Naive thymus-derived CD4-positive, alpha-beta T cell (primary cell): ENCODE measurements at regions of chr12 and their contacts with region 1.

Region 1: DNA sequence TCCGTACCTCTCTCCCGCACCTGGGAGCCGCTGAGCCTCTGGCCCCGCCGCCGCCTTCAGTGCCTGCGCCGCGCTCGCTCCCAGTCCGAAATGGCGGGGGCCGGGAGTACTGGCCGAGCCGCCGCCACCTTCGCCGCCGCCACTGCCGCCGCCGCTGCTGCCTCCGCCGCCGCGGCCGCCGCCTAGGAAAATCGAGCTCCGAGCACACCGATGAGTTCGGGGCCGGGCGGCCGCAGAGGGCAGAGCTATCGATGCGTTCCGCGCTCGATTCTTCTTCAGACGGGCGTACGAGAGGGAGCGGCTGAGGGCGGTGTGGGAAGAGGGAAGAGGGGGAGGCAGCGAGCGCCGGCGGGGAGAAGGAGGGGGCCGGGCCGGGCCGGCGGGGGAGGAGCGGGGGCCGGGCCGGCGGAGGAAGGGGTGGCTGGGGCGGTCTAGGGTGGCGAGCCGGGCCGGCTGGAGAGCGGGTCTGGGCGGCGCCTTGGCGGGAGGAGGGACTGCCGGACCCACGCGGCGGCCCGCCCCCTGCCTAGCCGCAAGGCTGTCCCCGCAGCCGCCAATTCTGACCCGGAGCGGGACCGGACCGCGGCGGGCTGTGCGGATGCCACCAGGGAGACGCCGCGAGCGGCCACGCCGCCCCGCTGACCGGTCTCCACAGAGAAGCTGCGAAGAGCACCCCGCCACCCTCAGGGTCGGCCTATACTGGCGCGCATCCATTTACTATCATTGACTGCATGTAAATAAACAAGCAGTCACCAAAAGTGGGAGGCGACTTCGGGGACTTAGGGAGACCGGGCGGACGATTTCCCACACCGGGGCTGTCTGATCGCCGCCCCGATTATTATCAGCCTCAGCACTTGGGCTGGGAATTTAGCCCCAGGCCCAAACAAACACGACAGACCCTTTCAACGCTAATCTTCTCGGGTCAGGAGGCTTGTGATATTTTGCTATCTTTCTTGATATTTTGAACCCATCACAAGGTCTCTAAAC is at the start of gene KRAS:
- DNase-seq: peak; percentile 83 to 90 (median 90)
- ATAC-seq: peak; percentile 96
- H3K4me3 ChIP-seq: peak within 1 kb of the TSS; percentile 64
- H3K4me3 Mint-ChIP-seq: peak within 1 kb of the TSS; percentile 84 to 97 (median 94)
- H3K27ac ChIP-seq: peak within 1 kb of the TSS; percentile 91
- H3K27ac Mint-ChIP-seq: peak within 1 kb of the TSS; percentile 84 to 96 (median 94)
- H3K4me1 ChIP-seq: peaks cover 0 to 5% of the 10 kb centered on the region in 2 donors
- H3K4me1 Mint-ChIP-seq: peaks cover 16 to 51% (median 44%) of the 10 kb centered on the region in 7 donors
- H3K27me3 ChIP-seq: no peaks in the 10 kb centered on the region
- H3K27me3 Mint-ChIP-seq: peaks cover 0 to 20% (median 0%) of the 10 kb centered on the region in 5 donors
- total RNA-seq, gene KRAS: 33.1 to 39.9 (median 35.7) TPM

Region 2: GRCh38 chr12:25269701-25270100 is 18.7 kb after region 1 on chr12:
- CTCF ChIA-PET with region 1: no interaction called
- POLR2A ChIA-PET with region 1: interaction called, 4 read pairs
- intact Hi-C with region 1: loop called in 1 of 2 experiments (anchors 2 kb)
- DNase-seq: no peak
- ATAC-seq: peak; percentile 56
- H3K4me3 ChIP-seq: no peak overlapping the region
- H3K4me3 Mint-ChIP-seq: no peak overlapping the region
- H3K27ac ChIP-seq: no peak overlapping the region
- H3K27ac Mint-ChIP-seq: no peak overlapping the region
- H3K4me1 ChIP-seq: no peaks in the 10 kb centered on the region
- H3K4me1 Mint-ChIP-seq: peaks cover 0 to 4% (median 0%) of the 10 kb centered on the region in 7 donors
- H3K27me3 ChIP-seq: no peaks in the 10 kb centered on the region
- H3K27me3 Mint-ChIP-seq: no peaks in the 10 kb centered on the region

Region 3: GRCh38 chr12:25283006-25283405 is 32.0 kb after region 1 on chr12:
- CTCF ChIA-PET with region 1: interaction called, 3 read pairs
- POLR2A ChIA-PET with region 1: interaction called, 13 read pairs
- intact Hi-C with region 1: loop called in 1 of 2 experiments (anchors 2 kb)
- DNase-seq: no peak
- ATAC-seq: no peak
- H3K4me3 ChIP-seq: no peak overlapping the region
- H3K4me3 Mint-ChIP-seq: peak overlapping the region in 7 of 10 donors; percentile 19 to 70 (median 53)
- H3K27ac ChIP-seq: peak overlapping the region; percentile 41
- H3K27ac Mint-ChIP-seq: peak overlapping the region in 7 of 9 donors; percentile 73 to 92 (median 81)
- H3K4me1 ChIP-seq: peaks cover 22 to 48% of the 10 kb centered on the region in 2 donors
- H3K4me1 Mint-ChIP-seq: peaks cover 12 to 66% (median 57%) of the 10 kb centered on the region in 7 donors
- H3K27me3 ChIP-seq: no peaks in the 10 kb centered on the region
- H3K27me3 Mint-ChIP-seq: peaks cover 0 to 3% (median 0%) of the 10 kb centered on the region in 5 donors

Region 4: GRCh38 chr12:25364529-25365339 is 113.7 kb after region 1 on chr12:
- CTCF ChIA-PET with region 1: interaction called, 3 read pairs
- POLR2A ChIA-PET with region 1: interaction called, 8 read pairs
- intact Hi-C with region 1: loop called in 1 of 2 experiments (anchors 1 kb)
- DNase-seq: peak in 2 of 9 donors; percentile 22 to 27
- ATAC-seq: peak; percentile 55
- H3K4me3 ChIP-seq: no peak overlapping the region
- H3K4me3 Mint-ChIP-seq: peak overlapping the region; percentile 0 to 83 (median 64)
- H3K27ac ChIP-seq: no peak overlapping the region
- H3K27ac Mint-ChIP-seq: peak overlapping the region; percentile 5 to 82 (median 61)
- H3K4me1 ChIP-seq: peaks cover 0 to 8% of the 10 kb centered on the region in 2 donors
- H3K4me1 Mint-ChIP-seq: peaks cover 0 to 18% (median 15%) of the 10 kb centered on the region in 7 donors
- H3K27me3 ChIP-seq: no peaks in the 10 kb centered on the region
- H3K27me3 Mint-ChIP-seq: peaks cover 0 to 4% (median 0%) of the 10 kb centered on the region in 5 donors

Region 5: DNA sequence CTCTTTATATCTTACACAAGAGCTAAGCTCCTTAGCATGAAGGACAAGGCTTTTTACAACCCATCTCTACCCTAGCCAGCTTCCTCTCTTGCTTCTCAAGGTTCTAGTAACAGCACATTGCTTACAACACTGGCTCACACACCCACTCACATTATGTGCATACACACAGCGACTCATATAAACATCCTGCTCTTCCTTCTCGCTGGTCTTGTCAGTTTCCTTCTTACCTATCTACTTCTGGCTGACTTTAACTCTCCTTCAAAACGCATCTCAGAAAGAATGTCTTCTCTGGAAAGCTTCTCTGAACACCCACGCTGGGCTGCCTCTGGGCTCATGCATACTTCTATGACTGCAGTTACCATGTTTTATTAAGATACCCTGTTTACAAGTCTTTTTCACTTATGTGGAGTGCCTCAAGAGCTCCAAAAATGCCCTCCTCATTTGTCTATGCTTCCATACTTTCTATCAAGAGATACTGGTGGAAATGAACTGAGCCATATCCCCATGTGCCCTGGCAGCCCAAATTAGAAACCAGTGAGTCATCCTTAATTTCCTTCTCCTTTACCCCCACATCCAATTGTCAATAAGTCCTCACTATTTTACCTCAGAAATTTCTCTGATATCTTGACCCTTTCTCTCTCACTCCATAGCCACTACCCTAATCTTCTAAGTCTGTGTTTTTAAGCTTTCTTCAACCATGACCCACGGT is 126.6 kb after region 1 on chr12:
- CTCF ChIA-PET with region 1: interaction called, 6 read pairs
- POLR2A ChIA-PET with region 1: interaction called, 52 read pairs
- intact Hi-C with region 1: no loop called
- DNase-seq: peak in 8 of 9 donors; percentile 46 to 81 (median 68)
- ATAC-seq: peak; percentile 90
- H3K4me3 ChIP-seq: no peak overlapping the region
- H3K4me3 Mint-ChIP-seq: peak overlapping the region; percentile 26 to 70 (median 60)
- H3K27ac ChIP-seq: peak overlapping the region; percentile 80
- H3K27ac Mint-ChIP-seq: peak overlapping the region; percentile 82 to 97 (median 92)
- H3K4me1 ChIP-seq: peaks cover 9 to 38% of the 10 kb centered on the region in 2 donors
- H3K4me1 Mint-ChIP-seq: peaks cover 27 to 71% (median 68%) of the 10 kb centered on the region in 7 donors
- H3K27me3 ChIP-seq: no peaks in the 10 kb centered on the region
- H3K27me3 Mint-ChIP-seq: no peaks in the 10 kb centered on the region

Region 6: GRCh38 chr12:25482625-25483024 is 231.6 kb after region 1 on chr12:
- CTCF ChIA-PET with region 1: no interaction called
- POLR2A ChIA-PET with region 1: no interaction called
- intact Hi-C with region 1: no loop called
- DNase-seq: no peak
- ATAC-seq: no peak
- H3K4me3 ChIP-seq: no peak overlapping the region
- H3K4me3 Mint-ChIP-seq: no peak overlapping the region
- H3K27ac ChIP-seq: no peak overlapping the region
- H3K27ac Mint-ChIP-seq: no peak overlapping the region
- H3K4me1 ChIP-seq: no peaks in the 10 kb centered on the region
- H3K4me1 Mint-ChIP-seq: no peaks in the 10 kb centered on the region
- H3K27me3 ChIP-seq: no peaks in the 10 kb centered on the region
- H3K27me3 Mint-ChIP-seq: no peaks in the 10 kb centered on the region

Region 7: GRCh38 chr12:25591144-25591543 is 340.1 kb after region 1 on chr12:
- CTCF ChIA-PET with region 1: no interaction called
- POLR2A ChIA-PET with region 1: no interaction called
- intact Hi-C with region 1: loop called in 1 of 2 experiments (anchors 10 kb)
- DNase-seq: no peak
- ATAC-seq: no peak
- H3K4me3 ChIP-seq: no peak overlapping the region
- H3K4me3 Mint-ChIP-seq: peak overlapping the region in 1 of 10 donors; percentile 74
- H3K27ac ChIP-seq: no peak overlapping the region
- H3K27ac Mint-ChIP-seq: peak overlapping the region in 8 of 9 donors; percentile 20 to 98 (median 88)
- H3K4me1 ChIP-seq: peaks cover 0 to 42% of the 10 kb centered on the region in 2 donors
- H3K4me1 Mint-ChIP-seq: peaks cover 17 to 85% (median 62%) of the 10 kb centered on the region in 7 donors
- H3K27me3 ChIP-seq: no peaks in the 10 kb centered on the region
- H3K27me3 Mint-ChIP-seq: no peaks in the 10 kb centered on the region

Region 8: DNA sequence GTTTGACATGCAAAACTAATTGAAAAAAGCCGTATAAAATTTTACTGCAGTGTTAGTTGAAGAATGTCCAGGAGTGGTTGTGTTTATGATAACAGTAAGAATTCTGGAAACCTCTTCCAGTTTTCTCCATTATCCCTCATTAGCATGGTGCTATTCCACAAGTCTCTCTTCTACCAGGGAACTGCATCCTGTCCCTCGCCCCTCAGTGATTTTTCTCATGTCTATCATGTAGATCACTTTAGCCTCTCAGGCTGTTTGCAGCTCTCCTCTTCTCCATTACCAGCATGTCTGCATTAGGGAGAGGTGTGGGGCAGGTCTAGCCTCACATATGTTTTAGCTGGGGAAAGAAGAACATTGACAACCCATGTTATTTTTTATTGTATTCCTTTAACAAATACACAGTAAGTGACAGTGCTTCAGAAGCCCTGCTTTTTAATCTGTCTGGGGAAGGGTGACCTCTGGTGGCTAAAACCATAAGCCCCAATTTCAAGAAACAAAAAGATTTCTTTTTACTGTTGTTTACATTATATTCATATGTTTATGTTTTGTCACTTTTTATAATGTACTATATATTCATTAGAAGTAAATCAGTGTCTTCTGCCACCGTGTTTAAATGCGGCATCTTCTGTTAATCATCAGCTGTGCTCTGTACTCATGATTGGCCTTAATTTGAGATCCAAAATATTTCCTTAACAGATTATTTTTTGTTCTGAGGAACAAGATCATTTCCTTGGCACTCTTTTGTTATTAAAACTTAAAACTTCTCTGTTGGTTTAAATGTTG is 778.1 kb after region 1 on chr12:
- CTCF ChIA-PET with region 1: no interaction called
- POLR2A ChIA-PET with region 1: no interaction called
- intact Hi-C with region 1: loop called in 1 of 2 experiments (anchors 10 kb)
- DNase-seq: peak in 6 of 9 donors; percentile 23 to 54 (median 40)
- ATAC-seq: no peak
- H3K4me3 ChIP-seq: no peak overlapping the region
- H3K4me3 Mint-ChIP-seq: no peak overlapping the region
- H3K27ac ChIP-seq: no peak overlapping the region
- H3K27ac Mint-ChIP-seq: no peak overlapping the region
- H3K4me1 ChIP-seq: no peaks in the 10 kb centered on the region
- H3K4me1 Mint-ChIP-seq: peaks cover 0 to 4% (median 0%) of the 10 kb centered on the region in 7 donors
- H3K27me3 ChIP-seq: no peaks in the 10 kb centered on the region
- H3K27me3 Mint-ChIP-seq: peaks cover 0 to 22% (median 5%) of the 10 kb centered on the region in 5 donors